BJ (cell line): ENCODE measurements at regions of chr1 and their contacts with region 1.

Region 1: GRCh38 chr1:186420923-186421322 is 40.0 kb downstream of the PDC start:
- DNase-seq: peak; percentile 11
- H3K4me3 ChIP-seq: no peak overlapping the region
- H3K27me3 ChIP-seq: no peaks in the 10 kb centered on the region
- CTCF ChIP-seq: no peak

Region 2: GRCh38 chr1:185926562-185926961 is 494.4 kb before region 1 on chr1:
- CTCF ChIA-PET with region 1: no interaction called
- POLR2A ChIA-PET with region 1: interaction called, 11 read pairs
- DNase-seq: no peak
- H3K4me3 ChIP-seq: no peak overlapping the region
- H3K27me3 ChIP-seq: no peaks in the 10 kb centered on the region
- CTCF ChIP-seq: no peak

Region 3: DNA sequence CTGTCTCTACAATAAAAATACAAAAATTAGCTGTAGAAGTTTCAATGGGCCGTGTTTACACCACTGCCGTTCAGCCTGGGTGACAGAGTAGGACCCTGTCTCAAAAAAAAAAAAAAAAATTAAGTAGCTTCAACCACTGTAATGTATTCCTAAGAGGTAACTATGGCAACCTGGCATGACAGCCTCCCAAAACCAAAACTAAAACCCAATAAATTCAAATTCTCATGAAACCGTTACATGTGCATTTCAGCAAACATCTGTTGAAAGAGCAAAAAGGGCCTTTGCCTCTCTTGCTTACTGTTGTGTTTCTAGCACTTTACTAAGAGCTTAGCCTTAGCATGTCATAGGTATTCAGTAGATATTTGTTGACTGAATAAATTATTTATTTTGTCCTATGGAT is 11.8 kb before region 1 on chr1:
- CTCF ChIA-PET with region 1: interaction called, 4 read pairs
- POLR2A ChIA-PET with region 1: interaction called, 11 read pairs
- DNase-seq: no peak
- H3K4me3 ChIP-seq: no peak overlapping the region
- H3K27me3 ChIP-seq: no peaks in the 10 kb centered on the region
- CTCF ChIP-seq: no peak